H1 (cell line): ENCODE measurements at regions of chr18 and their contacts with region 1.

Region 1: DNA sequence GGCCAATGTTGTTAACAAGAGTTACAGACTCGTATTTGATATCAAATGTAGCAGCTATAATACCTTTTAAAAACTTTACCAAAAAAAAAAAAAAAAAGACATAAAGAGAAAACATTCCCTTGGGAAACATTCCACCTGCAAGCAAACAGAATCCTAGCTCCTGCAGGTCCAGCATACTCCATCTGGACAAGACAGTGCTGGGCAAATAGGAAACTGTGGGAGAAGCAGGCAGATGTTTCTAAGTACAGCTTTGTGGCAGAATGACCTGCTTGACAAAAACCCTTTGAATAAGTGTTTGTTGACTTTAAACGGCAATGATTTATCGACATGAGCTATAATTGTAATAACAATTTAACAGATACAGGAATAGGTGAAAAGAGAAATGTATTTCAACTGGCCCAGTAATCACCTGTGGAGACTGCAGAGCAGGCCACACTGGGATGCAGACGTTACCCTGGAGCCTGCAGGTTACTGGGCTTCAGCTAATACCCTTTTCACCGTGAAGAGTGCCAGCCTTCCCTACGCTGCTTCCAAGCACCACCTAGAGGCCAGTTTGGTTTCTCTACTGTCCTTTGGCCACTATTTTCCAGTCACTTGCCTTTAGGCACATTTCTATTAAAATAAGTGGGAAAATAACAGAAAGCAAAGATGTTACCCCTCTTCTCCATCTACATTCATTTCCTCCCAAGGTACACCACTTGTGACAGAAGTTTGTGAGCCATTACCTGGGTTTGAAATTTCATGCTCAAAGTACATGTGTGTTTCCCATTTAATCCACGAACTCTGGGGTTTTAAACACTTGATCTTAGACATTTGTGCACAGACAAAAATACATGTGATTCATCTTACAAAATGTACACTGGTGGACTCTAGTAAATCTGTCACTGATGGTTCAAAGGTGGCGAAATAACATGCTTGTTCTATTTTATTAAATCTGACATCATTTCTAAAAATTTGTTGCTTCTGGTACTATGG is 96.9 kb upstream of the ZNF397 start:
- DNase-seq: peak; percentile 27 to 56
- H3K4me3 ChIP-seq: no peak overlapping the region
- H3K27ac ChIP-seq: no peak overlapping the region
- H3K4me1 ChIP-seq: peaks cover 2 to 7% (median 4%) of the 10 kb centered on the region in 4 experiments; a peak in 4 of 7 replicates
- H3K27me3 ChIP-seq: no peaks in the 10 kb centered on the region
- CTCF ChIP-seq: peak; percentile 55 to 89 (median 86)
- EP300 ChIP-seq: no peak
- POLR2A ChIP-seq: no peak
- RAD21 ChIP-seq: peak; percentile 86 to 92

Region 2: GRCh38 chr18:35029770-35030169 is 114.1 kb before region 1 on chr18:
- CTCF ChIA-PET with region 1: interaction called, 71 read pairs
- POLR2A ChIA-PET with region 1: interaction called, 3 read pairs
- DNase-seq: no peak
- H3K4me3 ChIP-seq: no peak overlapping the region
- H3K27ac ChIP-seq: no peak overlapping the region
- H3K4me1 ChIP-seq: peaks cover 0 to 7% (median 0%) of the 10 kb centered on the region in 4 experiments; a peak in 2 of 7 replicates
- H3K27me3 ChIP-seq: no peaks in the 10 kb centered on the region
- CTCF ChIP-seq: no peak
- EP300 ChIP-seq: no peak
- POLR2A ChIP-seq: no peak
- RAD21 ChIP-seq: no peak

Region 3: DNA sequence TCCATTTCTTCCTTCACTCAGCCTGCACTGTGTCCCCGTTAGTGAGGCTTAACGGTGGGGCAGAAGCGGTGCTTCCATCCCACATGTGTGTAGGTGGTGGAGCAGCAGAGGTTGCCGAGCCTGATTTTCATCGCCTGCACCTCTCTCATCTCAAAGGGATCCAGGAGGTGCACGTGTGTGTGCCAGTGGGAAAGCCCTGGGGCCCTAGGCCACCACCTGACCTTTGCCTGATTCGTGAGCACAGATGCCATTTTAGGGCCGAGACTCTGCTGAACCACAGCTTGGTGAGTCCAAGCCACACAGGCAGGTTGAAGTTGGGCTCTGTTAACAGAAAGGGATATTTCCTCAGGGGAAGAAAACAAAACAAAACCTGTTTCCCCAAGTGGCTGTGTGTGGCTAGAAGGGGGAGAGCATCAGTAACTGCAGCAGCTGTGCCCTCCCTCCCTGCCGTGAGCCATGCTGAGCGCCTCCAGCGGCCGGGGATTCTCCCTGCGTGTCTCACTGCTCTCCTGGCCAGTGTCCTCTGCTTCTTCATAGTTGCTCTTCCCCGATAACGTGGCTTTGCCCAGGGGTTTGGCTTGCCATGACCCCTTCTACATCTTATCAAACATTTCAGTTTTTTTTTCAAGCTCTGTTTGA is 21.2 kb before region 1 on chr18:
- CTCF ChIA-PET with region 1: interaction called, 48 read pairs
- POLR2A ChIA-PET with region 1: no interaction called
- DNase-seq: peak in 1 of 2 experiments; percentile 73
- H3K4me3 ChIP-seq: no peak overlapping the region
- H3K27ac ChIP-seq: no peak overlapping the region
- H3K4me1 ChIP-seq: peaks cover 0 to 11% (median 5%) of the 10 kb centered on the region in 4 experiments; a peak in 6 of 7 replicates
- H3K27me3 ChIP-seq: no peaks in the 10 kb centered on the region
- CTCF ChIP-seq: peak; percentile 32 to 80 (median 72); a peak in 3 of 4 replicates
- EP300 ChIP-seq: no peak
- POLR2A ChIP-seq: no peak
- RAD21 ChIP-seq: peak; percentile 32 to 43

Region 4: DNA sequence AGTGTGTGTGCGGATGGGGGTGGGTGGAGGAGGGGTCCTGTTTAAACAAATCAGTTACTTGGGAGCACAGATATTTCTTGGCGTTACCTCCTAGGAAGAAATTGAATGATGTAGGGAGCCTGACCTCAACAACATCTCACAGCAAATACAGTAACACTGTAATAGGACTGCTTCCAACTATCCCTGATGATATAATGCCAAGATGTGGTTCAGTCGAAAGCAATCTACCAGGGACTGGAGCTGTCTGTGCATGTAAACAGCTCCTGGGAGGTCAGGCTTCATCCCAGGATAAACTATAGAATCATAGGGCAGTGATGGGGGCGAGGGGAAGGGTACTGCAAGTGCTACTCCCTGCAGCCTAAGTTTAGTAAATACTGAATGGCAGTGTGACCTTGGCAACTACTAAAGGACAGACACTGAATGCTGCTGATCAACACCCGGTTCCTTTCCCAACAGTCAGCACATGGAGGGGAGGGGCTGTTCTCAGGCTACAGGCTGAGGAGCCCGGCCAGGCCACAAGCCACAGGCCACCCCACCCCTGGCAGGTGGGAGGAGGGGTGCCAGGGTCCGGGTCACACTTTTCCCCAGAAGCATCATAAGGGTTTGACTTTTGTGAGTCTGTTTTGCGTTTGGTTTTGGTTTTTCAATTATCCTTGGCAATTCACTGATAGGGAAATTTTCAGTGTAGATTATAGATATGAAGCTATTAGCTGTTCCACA is 11.6 kb after region 1 on chr18:
- CTCF ChIA-PET with region 1: interaction called, 17 read pairs
- POLR2A ChIA-PET with region 1: no interaction called
- DNase-seq: no peak
- H3K4me3 ChIP-seq: no peak overlapping the region
- H3K27ac ChIP-seq: no peak overlapping the region
- H3K4me1 ChIP-seq: peaks cover 0 to 7% (median 4%) of the 10 kb centered on the region in 4 experiments; a peak in 5 of 7 replicates
- H3K27me3 ChIP-seq: no peaks in the 10 kb centered on the region
- CTCF ChIP-seq: no peak
- EP300 ChIP-seq: no peak
- POLR2A ChIP-seq: no peak
- RAD21 ChIP-seq: no peak